Naive thymus-derived CD4-positive, alpha-beta T cell (primary cell): ENCODE measurements at regions of chr15 and their contacts with region 1.

Region 1: GRCh38 chr15:34209421-34210282 is at the start of gene KATNBL1:
- DNase-seq: peak; percentile 81 to 98 (median 89)
- ATAC-seq: peak; percentile 100
- H3K4me3 ChIP-seq: peak within 1 kb of the TSS; percentile 69
- H3K4me3 Mint-ChIP-seq: peak within 1 kb of the TSS; percentile 84 to 94 (median 91)
- H3K27ac ChIP-seq: peak within 1 kb of the TSS; percentile 77
- H3K27ac Mint-ChIP-seq: peak within 1 kb of the TSS; percentile 28 to 93 (median 84)
- H3K4me1 ChIP-seq: peaks cover 0 to 5% of the 10 kb centered on the region in 2 donors
- H3K4me1 Mint-ChIP-seq: peaks cover 8 to 33% (median 25%) of the 10 kb centered on the region in 7 donors
- H3K27me3 ChIP-seq: no peaks in the 10 kb centered on the region
- H3K27me3 Mint-ChIP-seq: peaks cover 0 to 4% (median 0%) of the 10 kb centered on the region in 5 donors
- total RNA-seq, gene KATNBL1: 21.8 to 40.3 (median 33.0) TPM

Region 2: GRCh38 chr15:33737687-33738601 is 471.7 kb before region 1 on chr15:
- CTCF ChIA-PET with region 1: no interaction called
- POLR2A ChIA-PET with region 1: no interaction called
- intact Hi-C with region 1: loop called in 1 of 2 experiments (anchors 5 kb)
- DNase-seq: peak in 6 of 9 donors; percentile 6 to 23 (median 7)
- ATAC-seq: no peak
- H3K4me3 ChIP-seq: no peak overlapping the region
- H3K4me3 Mint-ChIP-seq: peak overlapping the region in 1 of 10 donors; percentile 21
- H3K27ac ChIP-seq: no peak overlapping the region
- H3K27ac Mint-ChIP-seq: no peak overlapping the region
- H3K4me1 ChIP-seq: no peaks in the 10 kb centered on the region
- H3K4me1 Mint-ChIP-seq: peaks cover 0 to 4% (median 3%) of the 10 kb centered on the region in 7 donors
- H3K27me3 ChIP-seq: no peaks in the 10 kb centered on the region
- H3K27me3 Mint-ChIP-seq: peaks cover 0 to 5% (median 0%) of the 10 kb centered on the region in 5 donors

Region 3: DNA sequence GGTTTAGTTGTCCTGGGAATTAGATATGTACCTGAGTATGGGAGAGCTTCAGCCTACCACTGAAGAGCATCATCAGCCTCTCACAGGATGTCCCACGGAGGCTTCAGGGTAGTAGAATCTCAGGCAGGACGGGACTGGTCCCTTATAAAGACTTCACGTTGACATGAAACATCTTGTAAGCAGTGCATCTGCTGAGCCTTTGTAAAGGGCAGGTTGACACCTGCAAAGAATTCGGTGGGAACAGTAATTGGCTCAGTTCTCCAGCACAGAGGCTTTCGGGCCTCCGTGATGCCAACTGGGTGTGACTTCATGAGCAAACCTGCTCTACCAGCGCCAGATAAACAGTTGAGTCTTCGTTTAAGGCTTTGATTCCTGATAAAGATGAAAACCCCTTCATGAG is 143.7 kb before region 1 on chr15:
- CTCF ChIA-PET with region 1: interaction called, 59 read pairs
- POLR2A ChIA-PET with region 1: interaction called, 4 read pairs
- intact Hi-C with region 1: loop called (anchors 1 kb)
- DNase-seq: no peak
- ATAC-seq: no peak
- H3K4me3 ChIP-seq: no peak overlapping the region
- H3K4me3 Mint-ChIP-seq: no peak overlapping the region
- H3K27ac ChIP-seq: no peak overlapping the region
- H3K27ac Mint-ChIP-seq: peak overlapping the region in 2 of 9 donors; percentile 5 to 49
- H3K4me1 ChIP-seq: no peaks in the 10 kb centered on the region
- H3K4me1 Mint-ChIP-seq: peaks cover 0 to 10% (median 4%) of the 10 kb centered on the region in 7 donors
- H3K27me3 ChIP-seq: no peaks in the 10 kb centered on the region
- H3K27me3 Mint-ChIP-seq: no peaks in the 10 kb centered on the region

Region 4: DNA sequence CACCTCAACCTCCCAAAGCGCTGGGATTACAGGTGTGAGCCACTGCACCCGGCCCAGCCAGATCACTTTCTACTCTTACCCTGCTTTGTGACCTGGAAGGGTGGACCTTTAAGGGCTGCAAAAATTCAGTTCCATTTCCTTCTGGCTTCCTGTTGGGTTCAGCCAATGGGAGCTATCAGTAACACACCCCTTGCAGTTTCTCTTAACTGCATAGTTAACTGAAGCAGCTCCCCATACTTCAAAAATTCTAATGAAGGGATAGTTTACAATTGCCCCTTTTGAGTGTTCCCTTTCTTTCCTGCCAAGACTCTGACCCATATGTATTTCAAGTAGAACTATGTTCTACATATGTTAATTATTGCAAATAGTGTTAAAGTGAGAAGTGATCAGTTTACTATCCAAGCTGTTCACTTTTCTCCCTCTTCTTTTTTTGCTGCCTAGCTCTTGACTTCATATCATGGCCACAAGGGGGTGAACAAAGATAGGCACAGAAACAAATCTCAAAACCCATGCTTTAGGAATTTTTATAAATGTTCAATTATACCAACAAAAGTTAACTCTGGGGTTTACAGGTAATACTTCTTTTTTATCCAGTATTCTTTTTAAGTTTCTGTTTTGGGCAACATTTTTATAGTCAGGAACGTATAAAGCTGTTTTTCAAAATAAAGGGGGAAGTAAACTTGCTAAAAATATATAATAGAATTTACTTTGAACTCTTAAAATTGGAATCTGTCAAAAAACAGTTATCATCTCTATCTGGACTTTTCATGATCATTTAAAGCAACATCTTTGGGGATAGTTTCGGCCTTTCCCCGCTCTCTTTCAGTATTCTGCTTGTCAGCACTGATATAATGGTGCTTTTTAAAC is 99.6 kb before region 1 on chr15:
- CTCF ChIA-PET with region 1: interaction called, 6 read pairs
- POLR2A ChIA-PET with region 1: no interaction called
- intact Hi-C with region 1: loop called in 1 of 2 experiments (anchors 1 kb)
- DNase-seq: peak in 3 of 9 donors; percentile 11 to 17 (median 17)
- ATAC-seq: no peak
- H3K4me3 ChIP-seq: no peak overlapping the region
- H3K4me3 Mint-ChIP-seq: no peak overlapping the region
- H3K27ac ChIP-seq: no peak overlapping the region
- H3K27ac Mint-ChIP-seq: no peak overlapping the region
- H3K4me1 ChIP-seq: no peaks in the 10 kb centered on the region
- H3K4me1 Mint-ChIP-seq: peaks cover 0 to 6% (median 0%) of the 10 kb centered on the region in 7 donors
- H3K27me3 ChIP-seq: no peaks in the 10 kb centered on the region
- H3K27me3 Mint-ChIP-seq: peaks cover 0 to 17% (median 5%) of the 10 kb centered on the region in 5 donors

Region 5: DNA sequence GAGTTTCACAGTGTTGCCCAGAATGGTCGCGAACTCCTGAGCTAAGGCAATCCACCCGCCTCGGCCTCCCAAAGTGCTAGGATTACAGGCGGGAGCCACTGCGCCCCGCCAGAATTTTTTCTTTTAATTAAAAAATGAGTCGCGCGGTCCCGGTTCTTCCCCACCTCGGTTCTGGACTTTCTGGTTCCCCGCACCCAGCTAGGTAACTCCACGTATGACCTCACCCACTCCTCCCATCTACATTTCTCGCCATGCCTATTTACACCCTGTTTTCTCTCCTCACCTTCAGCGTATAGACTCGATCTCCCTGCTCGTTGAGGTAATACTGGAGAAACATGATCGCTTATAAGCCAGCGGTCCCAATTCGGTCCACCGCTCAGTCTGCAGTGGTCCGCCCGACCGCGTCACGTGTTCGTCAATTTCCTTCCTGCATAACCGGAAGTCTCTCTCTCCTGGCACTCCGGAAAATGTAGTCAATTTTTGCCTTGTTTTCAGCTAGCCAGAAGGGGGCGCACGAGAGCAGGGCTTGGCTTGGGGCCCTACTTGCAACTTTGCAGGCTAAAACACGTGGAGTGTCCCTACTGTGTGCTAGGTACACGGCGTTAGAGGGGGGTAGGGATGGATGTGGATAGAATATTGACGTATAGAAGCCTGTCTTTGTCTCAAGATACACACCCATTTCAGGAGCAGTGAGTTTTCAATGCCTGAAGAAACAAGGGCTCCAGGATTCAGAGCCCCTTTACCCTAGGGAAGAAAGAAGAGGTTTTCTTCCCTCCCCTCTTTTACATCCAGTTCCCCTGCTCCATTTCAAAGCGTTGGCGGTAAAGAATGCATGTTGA is 133.3 kb after region 1 on chr15 and contains the starts of genes NOP10 and NUTM1:
- CTCF ChIA-PET with region 1: interaction called, 3 read pairs
- POLR2A ChIA-PET with region 1: interaction called, 7 read pairs
- intact Hi-C with region 1: loop called in 1 of 2 experiments (anchors 2 kb)
- DNase-seq: peak; percentile 86 to 96 (median 90)
- ATAC-seq: peak; percentile 95
- H3K4me3 ChIP-seq: peak within 1 kb of the TSS; percentile 98
- H3K4me3 Mint-ChIP-seq: no peak within 1 kb of the TSS
- H3K27ac ChIP-seq: peak within 1 kb of the TSS; percentile 91
- H3K27ac Mint-ChIP-seq: peak within 1 kb of the TSS in 8 of 9 donors; percentile 41 to 96 (median 82)
- H3K4me1 ChIP-seq: peaks cover 9 to 13% of the 10 kb centered on the region in 2 donors
- H3K4me1 Mint-ChIP-seq: peaks cover 19 to 29% (median 24%) of the 10 kb centered on the region in 7 donors
- H3K27me3 ChIP-seq: no peaks in the 10 kb centered on the region
- H3K27me3 Mint-ChIP-seq: no peaks in the 10 kb centered on the region
- total RNA-seq, gene NOP10: 31.9 to 176 (median 75.7) TPM
- total RNA-seq, gene NUTM1: not detected

Region 6: GRCh38 chr15:35545824-35546510 is 1336.3 kb after region 1 on chr15 and contains the start of gene DPH6:
- CTCF ChIA-PET with region 1: no interaction called
- POLR2A ChIA-PET with region 1: no interaction called
- intact Hi-C with region 1: loop called in 1 of 2 experiments (anchors 5 kb)
- DNase-seq: peak; percentile 76 to 92 (median 87)
- ATAC-seq: peak; percentile 90
- H3K4me3 ChIP-seq: peak within 1 kb of the TSS; percentile 80
- H3K4me3 Mint-ChIP-seq: peak within 1 kb of the TSS; percentile 90 to 100 (median 98)
- H3K27ac ChIP-seq: peak within 1 kb of the TSS; percentile 93
- H3K27ac Mint-ChIP-seq: peak within 1 kb of the TSS; percentile 93 to 99 (median 98)
- H3K4me1 ChIP-seq: peaks cover 13 to 18% of the 10 kb centered on the region in 2 donors
- H3K4me1 Mint-ChIP-seq: peaks cover 5 to 33% (median 26%) of the 10 kb centered on the region in 7 donors
- H3K27me3 ChIP-seq: no peaks in the 10 kb centered on the region
- H3K27me3 Mint-ChIP-seq: no peaks in the 10 kb centered on the region
- total RNA-seq, gene DPH6: 10.5 to 16.6 (median 12.5) TPM